Gastrocnemius medialis (tissue), 4 donors: ENCODE measurements at regions of chr17 and their contacts with region 1.

Region 1: DNA sequence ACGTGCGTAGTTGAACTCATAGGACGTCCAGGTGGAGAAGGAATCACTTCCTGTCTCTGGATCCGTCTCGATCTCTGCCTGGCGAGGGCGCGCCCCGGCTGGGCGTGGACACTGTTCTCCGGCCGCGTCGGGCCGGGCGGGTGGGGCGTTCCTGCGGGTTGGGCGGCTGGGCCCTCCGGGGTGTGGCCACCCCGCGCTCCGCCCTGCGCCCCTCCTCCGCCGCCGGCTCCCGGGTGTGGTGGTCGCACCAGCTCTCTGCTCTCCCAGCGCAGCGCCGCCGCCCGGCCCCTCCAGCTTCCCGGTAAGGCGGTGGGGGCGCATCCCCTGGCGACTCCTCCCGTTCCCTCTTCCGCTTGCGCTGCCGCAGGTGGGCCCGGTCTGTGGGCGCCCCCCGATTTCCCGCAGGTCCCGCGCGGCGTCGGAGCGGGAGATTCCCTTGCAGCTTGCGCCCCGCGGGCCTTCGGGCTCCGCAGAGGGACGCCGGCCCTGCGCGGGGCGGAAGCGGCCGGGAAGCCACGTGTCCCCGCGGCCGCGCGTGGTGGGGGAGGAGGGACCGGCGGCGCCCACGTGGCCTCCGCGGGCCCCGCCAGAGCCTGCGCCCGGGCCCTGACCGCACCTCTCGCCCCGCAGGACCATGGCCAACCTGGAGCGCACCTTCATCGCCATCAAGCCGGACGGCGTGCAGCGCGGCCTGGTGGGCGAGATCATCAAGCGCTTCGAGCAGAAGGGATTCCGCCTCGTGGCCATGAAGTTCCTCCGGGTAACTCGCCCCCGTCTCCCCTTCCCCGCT is at the start of gene NME2:
- DNase-seq: peak; percentile 85 to 89
- ATAC-seq: peak; percentile 87 to 88
- H3K4me3 ChIP-seq: peak within 1 kb of the TSS; percentile 80 to 97 (median 88)
- H3K27ac ChIP-seq: peak within 1 kb of the TSS; percentile 93 to 100 (median 98)
- H3K4me1 ChIP-seq: peaks cover 4 to 16% of the 10 kb centered on the region in 2 donors
- H3K27me3 ChIP-seq: no peaks in the 10 kb centered on the region
- CTCF ChIP-seq: peak in 1 of 5 experiments; percentile 16
- POLR2A ChIP-seq: peak; percentile 75 to 78
- total RNA-seq, gene NME2: 412 to 666 (median 508) TPM

Region 2: GRCh38 chr17:51056813-51057510 is 109.4 kb before region 1 on chr17:
- in situ Hi-C with region 1: no loop called
- intact Hi-C with region 1: no loop called
- DNase-seq: peak; percentile 14 to 60
- ATAC-seq: peak; percentile 89 to 96
- H3K4me3 ChIP-seq: no peak overlapping the region
- H3K27ac ChIP-seq: peak overlapping the region; percentile 72 to 78 (median 74)
- H3K4me1 ChIP-seq: peaks cover 34 to 35% of the 10 kb centered on the region in 2 donors
- H3K27me3 ChIP-seq: no peaks in the 10 kb centered on the region
- CTCF ChIP-seq: peak; percentile 16 to 67 (median 51)
- POLR2A ChIP-seq: no peak

Region 3: GRCh38 chr17:51260125-51260880 is 93.9 kb after region 1 on chr17 and contains the start of gene UTP18:
- in situ Hi-C with region 1: no loop called
- intact Hi-C with region 1: loop called (anchors 2 kb)
- DNase-seq: peak; percentile 96 to 97
- ATAC-seq: peak; percentile 95 to 96
- H3K4me3 ChIP-seq: peak within 1 kb of the TSS; percentile 72 to 99 (median 94)
- H3K27ac ChIP-seq: peak within 1 kb of the TSS; percentile 89 to 99 (median 96)
- H3K4me1 ChIP-seq: peaks cover 41 to 44% of the 10 kb centered on the region in 2 donors
- H3K27me3 ChIP-seq: no peaks in the 10 kb centered on the region
- CTCF ChIP-seq: peak in 1 of 5 experiments; percentile 40
- POLR2A ChIP-seq: peak; percentile 64 to 76
- total RNA-seq, gene UTP18: 19.0 to 29.9 (median 21.4) TPM